HAP-1 (cell line): ENCODE measurements at regions of chr11 and their contacts with region 1.

Region 1: GRCh38 chr11:45371251-45372115 is 85.3 kb upstream of the SYT13 start:
- DNase-seq: peak; percentile 62 to 84
- H3K4me3 ChIP-seq: no peak overlapping the region
- H3K4me1 ChIP-seq: peaks cover 5% of the 10 kb centered on the region
- H3K27me3 ChIP-seq: peaks cover 4% of the 10 kb centered on the region; the same call in 1 of the 2 replicates

Region 2: GRCh38 chr11:45484326-45484883 is 112.9 kb after region 1 on chr11:
- in situ Hi-C with region 1: no loop called
- DNase-seq: no peak
- H3K4me3 ChIP-seq: no peak overlapping the region
- H3K4me1 ChIP-seq: no peaks in the 10 kb centered on the region
- H3K27me3 ChIP-seq: no peaks in the 10 kb centered on the region

Region 3: DNA sequence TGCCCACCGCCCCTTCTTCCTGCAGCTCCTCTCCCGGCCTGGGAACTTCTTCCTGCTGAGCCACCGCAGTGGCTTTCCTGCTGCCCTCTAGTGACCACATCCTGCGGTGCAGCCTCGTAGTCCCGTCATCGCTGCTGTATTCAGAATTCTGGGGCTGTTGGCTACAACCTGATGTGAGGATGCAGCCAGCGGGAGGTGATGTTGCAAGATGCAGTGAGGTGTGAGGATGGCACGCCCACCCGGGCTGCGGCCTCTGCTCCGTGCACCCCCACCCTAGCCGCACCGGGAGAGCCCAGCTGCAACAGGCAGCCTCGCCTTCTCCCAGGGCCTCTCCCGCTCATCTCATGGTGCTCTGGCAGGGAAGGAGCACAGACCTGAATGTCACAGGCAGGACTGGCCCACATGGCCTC is 283.9 kb after region 1 on chr11:
- in situ Hi-C with region 1: loop called (anchors 10 kb)
- DNase-seq: peak; percentile 51 to 86
- H3K4me3 ChIP-seq: no peak overlapping the region
- H3K4me1 ChIP-seq: 0 out of 2 replicates have a peak, but pooled peaks cover 2% of the 10 kb centered on the region
- H3K27me3 ChIP-seq: peaks cover 2% of the 10 kb centered on the region; the same call in 1 of the 2 replicates